Endothelial cell of umbilical vein (primary cell): ENCODE measurements at regions of chr7 and their contacts with region 1.

Region 1: DNA sequence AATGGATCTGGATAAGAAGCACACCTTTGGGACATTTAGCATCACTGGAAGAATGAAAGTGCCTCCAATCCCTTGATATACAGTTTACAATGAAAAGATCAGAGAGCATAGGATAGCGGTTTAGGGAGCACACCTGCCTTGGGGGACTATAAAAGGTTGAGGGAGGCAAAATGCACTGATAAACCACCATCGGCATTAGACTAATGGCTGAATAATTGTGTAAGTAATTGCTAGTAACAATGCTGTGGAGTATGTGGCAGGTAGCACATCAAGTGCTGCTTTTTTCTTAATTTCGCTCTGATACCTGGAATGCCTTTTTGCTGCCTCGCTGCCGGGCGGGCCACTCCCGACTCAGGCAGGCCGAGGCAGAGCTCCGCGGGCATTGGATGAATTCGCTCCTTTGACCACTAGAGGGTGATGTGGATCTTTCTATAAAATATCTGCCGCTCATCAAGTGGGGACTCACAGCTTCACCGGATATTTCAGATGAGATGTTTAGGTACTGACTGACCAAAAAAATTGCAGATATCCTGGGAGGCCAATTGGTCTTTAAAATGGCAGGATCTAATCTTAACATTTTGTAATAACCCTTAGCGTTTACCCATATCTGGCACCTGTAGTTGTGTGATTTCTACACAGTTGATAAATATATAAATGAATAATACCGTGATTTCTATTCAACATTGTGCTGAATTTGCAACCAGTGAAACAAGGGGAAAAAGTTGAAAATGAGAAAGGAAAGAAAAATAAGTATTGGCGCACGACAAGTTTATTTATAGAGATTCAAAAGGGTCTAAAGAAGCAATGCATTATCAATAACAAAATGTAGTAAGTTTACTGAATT is 116.8 kb upstream of the PRSS1 start:
- DNase-seq: peak; percentile 74
- H3K4me3 ChIP-seq: no peak overlapping the region
- H3K27ac ChIP-seq: no peak overlapping the region
- H3K4me1 ChIP-seq: no peaks in the 10 kb centered on the region
- H3K27me3 ChIP-seq: peaks cover 1 to 3% of the 10 kb centered on the region in 2 experiments
- CTCF ChIP-seq: peak; percentile 69 to 73
- POLR2A ChIP-seq: no peak

Region 2: GRCh38 chr7:142557971-142558582 is 74.4 kb before region 1 on chr7:
- CTCF ChIA-PET with region 1: interaction called, 26 read pairs
- POLR2A ChIA-PET with region 1: no interaction called
- dilution Hi-C with region 1: no loop called
- intact Hi-C with region 1: loop called (anchors 2 kb)
- DNase-seq: peak; percentile 48
- H3K4me3 ChIP-seq: no peak overlapping the region
- H3K27ac ChIP-seq: peak overlapping the region; percentile 70
- H3K4me1 ChIP-seq: peaks cover 40% of the 10 kb centered on the region
- H3K27me3 ChIP-seq: no peaks in the 10 kb centered on the region
- CTCF ChIP-seq: peak; percentile 62 to 89
- POLR2A ChIP-seq: no peak

Region 3: GRCh38 chr7:142646386-142647140 is 14.1 kb after region 1 on chr7:
- CTCF ChIA-PET with region 1: interaction called, 21 read pairs
- POLR2A ChIA-PET with region 1: no interaction called
- dilution Hi-C with region 1: no loop called
- intact Hi-C with region 1: no loop called
- DNase-seq: no peak
- H3K4me3 ChIP-seq: no peak overlapping the region
- H3K27ac ChIP-seq: no peak overlapping the region
- H3K4me1 ChIP-seq: no peaks in the 10 kb centered on the region
- H3K27me3 ChIP-seq: peaks cover 16 to 34% of the 10 kb centered on the region in 2 experiments
- CTCF ChIP-seq: no peak
- POLR2A ChIP-seq: no peak

Region 4: DNA sequence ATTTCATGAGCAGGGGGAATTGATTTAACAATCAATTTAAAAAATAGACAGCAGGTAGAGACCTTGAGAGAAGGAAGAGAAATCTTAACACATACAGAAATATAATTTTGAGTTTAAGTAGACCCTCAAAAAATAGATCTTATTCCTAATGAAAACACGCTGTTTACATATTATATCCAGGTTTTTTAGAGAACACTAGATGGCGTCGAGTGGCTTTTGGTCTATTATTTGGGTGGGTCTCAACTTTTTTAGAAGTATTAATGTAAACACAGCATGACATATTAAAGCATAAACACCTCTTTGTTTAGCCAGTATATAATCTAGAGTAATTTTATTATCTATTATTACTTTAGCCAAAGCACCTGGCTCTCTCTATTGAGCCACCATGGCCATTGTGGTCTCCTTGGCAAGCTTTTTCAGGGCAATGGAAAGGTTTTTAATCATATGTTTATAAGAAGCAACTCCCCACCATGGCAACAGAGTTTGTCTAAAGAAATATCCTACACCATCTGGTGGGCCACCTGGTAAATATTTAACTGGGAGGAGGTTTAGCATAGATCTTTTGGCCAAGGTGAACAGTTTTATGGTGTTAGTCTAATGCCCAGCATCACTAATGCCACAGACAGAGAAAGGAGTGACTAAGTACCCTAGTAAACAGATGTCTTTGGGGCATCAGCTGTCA is 57.1 kb after region 1 on chr7:
- CTCF ChIA-PET with region 1: interaction called, 3 read pairs
- POLR2A ChIA-PET with region 1: no interaction called
- dilution Hi-C with region 1: no loop called
- intact Hi-C with region 1: loop called (anchors 5 kb)
- DNase-seq: peak; percentile 23
- H3K4me3 ChIP-seq: no peak overlapping the region
- H3K27ac ChIP-seq: no peak overlapping the region
- H3K4me1 ChIP-seq: no peaks in the 10 kb centered on the region
- H3K27me3 ChIP-seq: peaks cover 6 to 13% of the 10 kb centered on the region in 2 experiments
- CTCF ChIP-seq: no peak
- POLR2A ChIP-seq: no peak

Region 5: DNA sequence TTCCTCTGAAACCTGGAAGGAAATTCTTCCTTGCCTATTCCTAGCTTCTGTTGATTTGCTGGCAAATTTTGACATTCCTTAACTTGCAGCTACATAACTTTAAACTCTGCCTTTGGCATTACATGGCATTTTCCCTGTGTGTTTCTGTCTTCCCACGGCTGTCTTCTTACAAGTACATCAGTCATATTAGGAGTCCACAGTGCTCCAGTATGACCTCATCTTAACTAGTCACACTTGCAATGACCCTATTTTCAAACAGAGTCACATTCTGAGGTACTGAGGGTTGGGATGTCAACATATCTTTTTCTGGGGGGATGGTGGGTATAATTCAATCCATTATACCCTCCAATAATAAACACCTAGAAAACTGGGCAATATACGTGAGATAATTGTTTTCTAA is 185.0 kb after region 1 on chr7:
- CTCF ChIA-PET with region 1: interaction called, 104 read pairs
- POLR2A ChIA-PET with region 1: no interaction called
- dilution Hi-C with region 1: no loop called
- intact Hi-C with region 1: no loop called
- DNase-seq: no peak
- H3K4me3 ChIP-seq: no peak overlapping the region
- H3K27ac ChIP-seq: no peak overlapping the region
- H3K4me1 ChIP-seq: peaks cover 3% of the 10 kb centered on the region
- H3K27me3 ChIP-seq: peaks cover 8 to 24% of the 10 kb centered on the region in 2 experiments
- CTCF ChIP-seq: no peak
- POLR2A ChIP-seq: no peak

Region 6: GRCh38 chr7:142838461-142839213 is 206.1 kb after region 1 on chr7:
- CTCF ChIA-PET with region 1: no interaction called
- POLR2A ChIA-PET with region 1: no interaction called
- dilution Hi-C with region 1: no loop called
- intact Hi-C with region 1: no loop called
- DNase-seq: no peak
- H3K4me3 ChIP-seq: no peak overlapping the region
- H3K27ac ChIP-seq: no peak overlapping the region
- H3K4me1 ChIP-seq: peaks cover 9% of the 10 kb centered on the region
- H3K27me3 ChIP-seq: no peaks in the 10 kb centered on the region
- CTCF ChIP-seq: no peak
- POLR2A ChIP-seq: no peak

Region 7: GRCh38 chr7:142853739-142854371 is 221.3 kb after region 1 on chr7:
- CTCF ChIA-PET with region 1: interaction called, 10 read pairs
- POLR2A ChIA-PET with region 1: no interaction called
- dilution Hi-C with region 1: no loop called
- intact Hi-C with region 1: no loop called
- DNase-seq: peak; percentile 77
- H3K4me3 ChIP-seq: peak overlapping the region; percentile 48 to 73 (median 65)
- H3K27ac ChIP-seq: no peak overlapping the region
- H3K4me1 ChIP-seq: peaks cover 3% of the 10 kb centered on the region
- H3K27me3 ChIP-seq: peaks cover 7 to 10% of the 10 kb centered on the region in 2 experiments
- CTCF ChIP-seq: peak; percentile 67 to 87
- POLR2A ChIP-seq: no peak

Region 8: GRCh38 chr7:142866361-142867058 is 234.0 kb after region 1 on chr7:
- CTCF ChIA-PET with region 1: interaction called, 35 read pairs
- POLR2A ChIA-PET with region 1: no interaction called
- dilution Hi-C with region 1: no loop called
- intact Hi-C with region 1: loop called (anchors 1 kb)
- DNase-seq: peak; percentile 29
- H3K4me3 ChIP-seq: no peak overlapping the region
- H3K27ac ChIP-seq: no peak overlapping the region
- H3K4me1 ChIP-seq: no peaks in the 10 kb centered on the region
- H3K27me3 ChIP-seq: no peaks in the 10 kb centered on the region
- CTCF ChIP-seq: peak; percentile 39 to 64
- POLR2A ChIP-seq: no peak

Region 9: DNA sequence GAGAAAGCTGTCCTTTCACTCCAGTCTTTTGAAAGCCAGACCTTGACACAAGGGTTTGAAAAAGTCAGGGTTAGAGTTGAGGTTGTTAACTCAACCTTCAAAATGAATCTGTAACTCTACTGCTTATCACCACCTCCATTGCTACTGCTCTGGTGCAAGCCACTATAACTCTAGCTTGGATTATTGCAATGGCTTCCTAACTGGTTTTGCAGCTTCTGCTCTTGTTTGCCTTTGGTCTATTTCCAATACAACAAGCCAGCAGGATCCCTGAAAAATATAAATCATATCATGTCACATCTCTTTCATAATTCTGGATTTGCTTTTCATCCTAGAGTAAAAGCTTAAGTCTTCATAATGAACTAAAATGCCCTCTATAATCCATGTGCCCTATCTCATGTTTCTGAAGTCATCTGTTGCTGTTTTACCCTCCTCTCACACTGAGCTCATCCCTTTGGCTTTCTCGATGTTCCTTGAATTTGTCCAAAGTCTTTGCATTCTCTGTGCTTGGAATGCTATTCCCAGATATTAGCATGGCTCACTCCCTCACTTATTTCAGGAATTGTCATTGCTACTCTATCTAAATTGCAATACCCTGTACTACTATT is 821.7 kb after region 1 on chr7:
- CTCF ChIA-PET with region 1: no interaction called
- POLR2A ChIA-PET with region 1: no interaction called
- dilution Hi-C with region 1: no loop called
- intact Hi-C with region 1: no loop called
- DNase-seq: no peak
- H3K4me3 ChIP-seq: no peak overlapping the region
- H3K27ac ChIP-seq: no peak overlapping the region
- H3K4me1 ChIP-seq: peaks cover 13% of the 10 kb centered on the region
- H3K27me3 ChIP-seq: no peaks in the 10 kb centered on the region
- CTCF ChIP-seq: no peak
- POLR2A ChIP-seq: no peak